Right ventricle myocardium inferior (tissue), 1 donor: ENCODE measurements at regions of chr5 and their contacts with region 1.

Region 1: GRCh38 chr5:138223532-138223931 is 10.4 kb upstream of the CDC23 start:
- DNase-seq: no peak
- ATAC-seq: no peak

Region 2: DNA sequence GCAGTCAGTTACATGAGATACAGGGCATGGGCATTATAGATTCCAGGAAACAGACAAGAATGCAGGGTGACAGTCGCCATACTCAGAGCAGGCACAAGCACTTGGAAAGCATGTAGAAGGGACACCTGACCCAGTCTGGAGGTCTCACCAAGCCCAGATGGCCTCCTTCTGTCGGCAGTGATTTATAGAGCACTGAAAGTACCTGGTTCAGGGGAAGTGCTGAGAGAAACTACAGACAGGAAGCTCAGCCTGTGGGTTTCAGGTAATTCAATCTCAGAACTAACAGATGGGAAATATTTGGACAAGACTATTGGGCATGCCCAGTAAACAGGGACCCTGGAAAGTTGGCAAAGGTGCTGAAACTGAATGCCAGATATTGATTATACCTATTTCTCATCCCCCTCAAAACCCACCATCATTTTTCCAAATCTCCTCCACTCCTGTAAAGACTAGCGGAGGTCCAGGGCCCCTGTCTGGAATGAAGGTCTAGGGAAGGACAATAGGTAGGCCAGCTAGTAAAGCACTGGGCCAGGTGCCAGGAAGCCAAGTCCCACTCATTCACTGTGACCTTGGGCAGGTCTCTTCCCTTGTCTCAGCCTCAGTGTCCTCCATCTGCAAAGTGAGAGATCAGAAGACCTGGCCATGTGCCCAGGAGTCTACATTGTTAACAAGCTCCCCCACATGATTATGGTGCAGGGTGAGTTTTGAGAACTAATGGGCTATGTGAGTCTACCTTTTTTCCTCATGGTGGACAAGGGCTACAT is 514.6 kb before region 1 on chr5:
- intact Hi-C with region 1: no loop called
- DNase-seq: no peak
- ATAC-seq: peak; percentile 37

Region 3: DNA sequence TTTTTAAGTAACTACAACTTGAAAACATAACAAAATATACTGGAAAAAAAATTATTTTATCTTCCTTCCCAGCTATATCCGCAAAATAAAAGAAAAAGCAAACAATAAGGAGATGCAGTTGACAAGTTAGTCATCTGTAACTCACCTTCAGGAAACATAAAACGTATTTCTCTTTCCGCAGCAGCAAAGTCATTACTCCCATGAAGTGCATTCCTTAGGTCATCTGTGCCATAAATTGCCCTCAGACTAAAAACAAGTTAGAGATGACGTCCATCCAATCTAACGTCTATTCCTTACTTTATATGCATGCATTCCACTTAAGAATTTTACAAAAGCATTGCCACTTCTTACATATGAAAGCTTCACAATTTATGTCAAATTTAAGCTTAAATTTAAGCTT is 95.2 kb before region 1 on chr5:
- intact Hi-C with region 1: no loop called
- DNase-seq: no peak
- ATAC-seq: no peak

Region 4: DNA sequence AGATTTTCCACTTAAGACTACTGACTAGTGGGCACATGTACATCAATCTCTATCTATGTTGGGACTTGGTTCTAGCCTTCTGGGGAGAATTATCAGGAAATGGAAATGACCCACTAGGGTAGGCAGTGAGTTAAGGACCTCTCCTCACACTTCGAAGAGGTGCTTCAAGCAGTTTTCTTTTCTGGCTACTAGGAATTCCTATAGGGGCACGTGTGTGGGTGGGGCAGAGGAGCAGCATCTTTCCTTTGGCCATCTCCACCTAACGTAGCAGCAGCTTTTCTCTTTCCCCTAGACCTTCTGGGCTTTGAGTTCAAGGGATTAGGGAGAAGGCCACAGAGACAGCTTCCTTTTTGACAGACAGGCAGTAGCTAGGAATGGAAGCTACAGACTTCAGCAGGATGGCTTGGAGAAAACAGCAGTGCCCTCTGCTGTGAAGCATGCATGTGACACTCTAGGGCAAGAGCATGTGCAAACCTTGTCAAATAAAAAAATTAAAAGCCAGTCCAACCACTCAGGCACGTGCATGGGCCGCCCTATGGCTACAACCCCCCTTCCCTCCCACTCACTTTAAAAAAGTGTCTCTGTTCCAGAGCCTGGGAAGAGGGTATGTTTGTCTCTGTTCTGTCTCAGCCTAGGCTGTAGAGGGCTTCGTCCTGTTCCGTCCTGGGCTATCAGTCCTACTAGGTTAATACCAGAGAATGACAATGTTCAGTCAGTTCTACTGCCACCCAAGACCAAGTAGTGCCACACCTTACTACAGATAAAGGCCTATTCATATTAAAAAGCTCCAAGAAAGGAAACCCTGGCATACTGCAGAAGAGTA is 59.6 kb after region 1 on chr5:
- intact Hi-C with region 1: loop called (anchors 1 kb)
- DNase-seq: no peak
- ATAC-seq: peak; percentile 79

Region 5: GRCh38 chr5:138408023-138408422 is 184.5 kb after region 1 on chr5:
- intact Hi-C with region 1: loop called (anchors 5 kb)
- DNase-seq: no peak
- ATAC-seq: no peak